Mammary epithelial cell (primary cell): ENCODE measurements at regions of chr6 and their contacts with region 1.

Region 1: GRCh38 chr6:75086236-75086635 is 119.6 kb downstream of the COL12A1 start:
- DNase-seq: no peak
- H3K4me3 ChIP-seq: no peak overlapping the region
- H3K27ac ChIP-seq: no peak overlapping the region
- H3K4me1 ChIP-seq: no peaks in the 10 kb centered on the region
- H3K27me3 ChIP-seq: no peaks in the 10 kb centered on the region
- CTCF ChIP-seq: no peak

Region 2: DNA sequence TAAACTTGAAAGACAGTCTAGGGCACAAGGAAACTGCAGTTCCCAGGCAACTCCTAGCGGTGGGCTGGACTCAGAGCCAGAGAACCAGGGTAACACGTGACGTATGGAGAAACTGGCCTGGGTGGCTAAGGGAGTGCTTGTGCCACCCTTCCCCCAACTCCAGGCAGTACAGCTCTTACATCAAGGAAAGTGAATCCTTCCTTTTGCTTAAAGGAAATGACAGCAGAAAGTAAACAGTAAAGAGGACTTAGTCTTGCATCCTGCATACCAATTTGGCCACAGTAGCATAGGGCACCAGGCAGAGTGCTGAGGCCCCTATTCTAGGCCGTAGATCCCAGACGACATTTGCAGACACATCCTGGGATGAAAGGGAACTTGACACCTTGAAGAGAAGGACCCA is 1067.4 kb before region 1 on chr6:
- CTCF ChIA-PET with region 1: no interaction called
- dilution Hi-C with region 1: no loop called
- in situ Hi-C with region 1: no loop called
- intact Hi-C with region 1: no loop called
- DNase-seq: no peak
- H3K4me3 ChIP-seq: no peak overlapping the region
- H3K27ac ChIP-seq: no peak overlapping the region
- H3K4me1 ChIP-seq: no peaks in the 10 kb centered on the region
- H3K27me3 ChIP-seq: peaks cover 2% of the 10 kb centered on the region
- CTCF ChIP-seq: no peak

Region 3: GRCh38 chr6:74979055-74979766 is 107.0 kb before region 1 on chr6:
- CTCF ChIA-PET with region 1: no interaction called
- dilution Hi-C with region 1: no loop called
- in situ Hi-C with region 1: no loop called
- intact Hi-C with region 1: no loop called
- DNase-seq: peak; percentile 96
- H3K4me3 ChIP-seq: no peak overlapping the region
- H3K27ac ChIP-seq: peak overlapping the region; percentile 99
- H3K4me1 ChIP-seq: peaks cover 29% of the 10 kb centered on the region
- H3K27me3 ChIP-seq: no peaks in the 10 kb centered on the region
- CTCF ChIP-seq: no peak

Region 4: GRCh38 chr6:75076009-75076408 is 10.2 kb before region 1 on chr6:
- CTCF ChIA-PET with region 1: no interaction called
- dilution Hi-C with region 1: no loop called
- in situ Hi-C with region 1: no loop called
- intact Hi-C with region 1: loop called (anchors 1 kb)
- DNase-seq: no peak
- H3K4me3 ChIP-seq: no peak overlapping the region
- H3K27ac ChIP-seq: no peak overlapping the region
- H3K4me1 ChIP-seq: no peaks in the 10 kb centered on the region
- H3K27me3 ChIP-seq: no peaks in the 10 kb centered on the region
- CTCF ChIP-seq: no peak